ENCODE measurements at regions of chr5 and their contacts with region 1.

Region 1: DNA sequence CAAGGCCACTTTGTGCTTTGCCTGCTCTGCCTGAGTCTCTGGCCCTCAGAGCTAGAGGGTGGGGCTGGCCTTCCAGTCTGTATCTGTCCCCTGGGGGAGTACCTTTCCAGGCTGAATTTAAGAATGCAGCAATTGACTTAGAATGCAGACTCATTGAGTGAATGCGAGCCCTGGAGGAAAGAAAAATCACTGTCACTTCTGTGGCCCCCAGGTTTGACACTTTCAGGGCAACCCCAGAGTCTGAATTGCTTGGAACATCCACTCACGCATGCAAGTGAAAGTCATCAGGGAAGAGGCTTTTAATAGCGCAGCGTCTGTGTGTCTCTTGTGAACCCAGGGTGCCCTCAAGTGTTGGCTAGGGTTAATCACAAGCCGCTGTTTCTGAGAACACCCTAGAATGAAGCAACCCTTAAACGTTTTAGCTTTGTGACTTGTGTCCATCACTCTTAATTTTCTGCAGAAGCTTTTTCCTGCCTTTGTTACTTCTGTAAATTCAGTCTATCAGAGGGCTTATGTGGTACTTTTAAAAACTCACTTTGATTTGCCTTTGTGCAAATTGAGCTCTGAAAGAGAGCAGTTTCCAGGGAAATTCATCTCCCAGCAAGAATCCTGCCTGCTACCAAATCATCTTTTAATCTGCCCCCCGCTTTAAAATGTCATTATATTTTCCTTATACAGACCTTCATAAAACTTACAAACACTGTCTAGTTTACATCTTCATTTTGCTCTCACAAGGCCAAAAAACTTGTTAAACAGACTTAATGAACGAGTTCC is 146.8 kb upstream of the IQGAP2 start:
- H3K4me3 Mint-ChIP-seq: no peak overlapping the region
- H3K27ac Mint-ChIP-seq: no peak overlapping the region
- H3K4me1 Mint-ChIP-seq: peaks cover 5% of the 10 kb centered on the region
- H3K27me3 Mint-ChIP-seq: peaks cover 5% of the 10 kb centered on the region

Region 2: DNA sequence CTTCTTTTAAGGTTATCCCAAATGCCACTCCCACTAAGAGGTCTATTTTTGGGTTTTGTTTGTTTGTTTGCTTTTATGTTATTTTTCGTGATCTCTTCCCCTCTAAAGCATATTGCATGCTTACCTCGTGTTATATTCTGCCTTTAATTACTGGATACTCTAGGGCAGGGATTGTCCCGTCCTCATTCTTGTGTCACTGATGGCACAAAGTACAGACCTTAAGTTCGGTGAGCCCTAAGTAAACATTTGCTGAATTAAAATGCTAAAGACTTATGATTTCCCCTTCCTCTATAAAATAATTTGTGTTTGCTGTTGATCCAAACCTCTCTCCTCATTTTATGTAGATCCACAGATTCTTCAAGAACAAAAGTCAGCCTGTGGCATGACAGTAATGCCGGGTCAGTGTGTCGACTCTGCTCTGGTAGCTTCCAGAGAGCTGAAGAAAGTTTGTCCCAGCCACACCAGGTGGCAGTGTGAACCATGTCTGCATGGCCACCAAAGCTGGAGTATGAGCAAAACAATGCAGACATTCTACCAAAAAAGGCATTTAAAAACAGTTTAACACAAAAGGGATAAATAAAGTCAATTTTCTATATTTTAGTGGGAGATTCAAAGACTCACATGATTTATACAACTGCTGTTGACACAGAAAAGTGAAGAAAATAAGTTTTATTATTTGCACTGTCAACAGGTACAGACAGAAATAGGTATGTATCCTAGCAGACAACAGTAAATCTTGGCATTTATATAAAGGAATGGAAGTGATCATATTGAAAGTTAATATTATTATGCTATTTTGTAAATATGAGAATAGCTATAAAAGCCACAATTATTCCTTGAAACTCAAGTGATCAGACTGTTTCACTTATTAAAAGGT is 521.2 kb before region 1 on chr5:
- intact Hi-C with region 1: loop called (anchors 10 kb)
- H3K4me3 Mint-ChIP-seq: no peak overlapping the region
- H3K27ac Mint-ChIP-seq: no peak overlapping the region
- H3K4me1 Mint-ChIP-seq: no peaks in the 10 kb centered on the region
- H3K27me3 Mint-ChIP-seq: no peaks in the 10 kb centered on the region

Region 3: DNA sequence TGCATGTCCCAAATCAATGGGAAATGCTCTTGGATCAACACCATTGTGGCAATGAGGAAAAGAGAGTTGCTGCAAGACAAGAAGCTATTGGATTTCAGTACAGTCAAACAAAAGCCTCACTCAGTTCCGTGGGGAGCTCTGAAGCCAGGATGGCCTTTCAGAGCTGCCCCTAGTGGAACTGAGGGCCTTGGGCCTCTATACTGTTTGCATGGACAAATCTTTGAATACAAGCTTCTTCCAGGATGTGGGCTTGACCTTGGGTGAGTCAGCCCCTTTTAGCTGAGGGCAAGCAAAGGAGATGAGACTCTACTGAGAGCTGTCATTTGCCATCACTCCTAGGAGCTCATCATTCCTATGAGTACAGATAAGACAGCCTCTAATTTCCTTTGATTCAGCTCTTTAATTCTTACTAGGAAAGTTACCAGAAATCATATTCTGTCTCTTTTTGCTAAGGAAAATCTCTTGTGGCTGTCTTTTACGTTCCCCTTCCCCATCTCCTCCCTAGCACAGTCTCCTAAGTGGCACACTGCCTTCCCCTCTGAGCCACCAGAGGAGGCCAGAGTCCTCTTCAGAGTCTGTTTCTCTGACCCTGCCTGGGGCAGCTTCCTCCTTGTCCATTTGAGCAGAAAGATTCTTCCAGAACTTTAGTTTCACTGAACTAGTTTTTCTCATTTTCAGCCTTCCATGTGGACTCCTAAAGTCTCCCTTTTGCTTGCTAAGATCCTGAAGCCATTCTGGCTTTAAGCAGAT is 370.3 kb before region 1 on chr5:
- intact Hi-C with region 1: loop called (anchors 5 kb)
- H3K4me3 Mint-ChIP-seq: no peak overlapping the region
- H3K27ac Mint-ChIP-seq: no peak overlapping the region
- H3K4me1 Mint-ChIP-seq: no peaks in the 10 kb centered on the region
- H3K27me3 Mint-ChIP-seq: no peaks in the 10 kb centered on the region

Region 4: GRCh38 chr5:76074487-76075065 is 181.7 kb before region 1 on chr5:
- intact Hi-C with region 1: loop called (anchors 1 kb)
- H3K4me3 Mint-ChIP-seq: no peak overlapping the region
- H3K27ac Mint-ChIP-seq: no peak overlapping the region
- H3K4me1 Mint-ChIP-seq: no peaks in the 10 kb centered on the region
- H3K27me3 Mint-ChIP-seq: peaks cover 41% of the 10 kb centered on the region

Region 5: DNA sequence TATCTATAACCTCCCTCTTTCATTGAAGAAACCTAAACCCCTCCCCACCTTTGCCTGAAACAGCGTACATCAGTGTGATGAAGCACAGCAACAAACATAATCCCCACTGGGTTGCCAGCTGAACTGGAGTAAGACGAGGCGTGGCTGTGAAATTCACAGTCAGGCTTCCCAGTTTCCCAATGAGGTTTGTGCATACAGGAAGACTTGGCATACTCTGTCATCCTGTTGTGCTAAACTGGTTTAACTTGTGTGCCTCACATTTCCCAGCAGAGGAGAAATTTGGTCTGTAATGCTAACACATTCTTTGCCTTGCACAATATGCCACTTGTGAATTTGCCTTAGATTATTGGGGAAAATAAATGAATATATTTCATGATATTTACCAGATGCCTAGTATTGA is 51.6 kb before region 1 on chr5:
- intact Hi-C with region 1: no loop called
- H3K4me3 Mint-ChIP-seq: no peak overlapping the region
- H3K27ac Mint-ChIP-seq: no peak overlapping the region
- H3K4me1 Mint-ChIP-seq: peaks cover 12% of the 10 kb centered on the region
- H3K27me3 Mint-ChIP-seq: no peaks in the 10 kb centered on the region

Region 6: DNA sequence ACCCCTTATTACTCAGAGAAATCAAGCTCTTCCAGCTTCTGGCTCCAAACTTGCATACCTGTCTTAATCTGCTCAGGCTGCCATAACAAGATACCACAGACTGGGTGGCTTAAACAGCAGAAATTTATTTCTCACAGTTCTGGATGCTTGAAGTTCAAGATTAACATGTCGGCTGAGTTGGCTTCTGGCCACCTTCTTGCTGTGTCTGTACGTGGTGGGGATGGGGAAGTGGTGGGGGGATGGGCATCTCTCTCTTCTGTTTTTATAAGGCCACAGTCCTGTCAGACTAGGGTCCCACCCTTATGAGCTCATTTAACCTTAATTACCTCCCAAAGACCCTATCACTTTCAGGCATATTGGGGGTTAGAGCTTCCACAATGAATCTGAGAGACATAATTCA is 32.6 kb before region 1 on chr5:
- intact Hi-C with region 1: no loop called
- H3K4me3 Mint-ChIP-seq: no peak overlapping the region
- H3K27ac Mint-ChIP-seq: no peak overlapping the region
- H3K4me1 Mint-ChIP-seq: peaks cover 6% of the 10 kb centered on the region
- H3K27me3 Mint-ChIP-seq: no peaks in the 10 kb centered on the region

Region 7: DNA sequence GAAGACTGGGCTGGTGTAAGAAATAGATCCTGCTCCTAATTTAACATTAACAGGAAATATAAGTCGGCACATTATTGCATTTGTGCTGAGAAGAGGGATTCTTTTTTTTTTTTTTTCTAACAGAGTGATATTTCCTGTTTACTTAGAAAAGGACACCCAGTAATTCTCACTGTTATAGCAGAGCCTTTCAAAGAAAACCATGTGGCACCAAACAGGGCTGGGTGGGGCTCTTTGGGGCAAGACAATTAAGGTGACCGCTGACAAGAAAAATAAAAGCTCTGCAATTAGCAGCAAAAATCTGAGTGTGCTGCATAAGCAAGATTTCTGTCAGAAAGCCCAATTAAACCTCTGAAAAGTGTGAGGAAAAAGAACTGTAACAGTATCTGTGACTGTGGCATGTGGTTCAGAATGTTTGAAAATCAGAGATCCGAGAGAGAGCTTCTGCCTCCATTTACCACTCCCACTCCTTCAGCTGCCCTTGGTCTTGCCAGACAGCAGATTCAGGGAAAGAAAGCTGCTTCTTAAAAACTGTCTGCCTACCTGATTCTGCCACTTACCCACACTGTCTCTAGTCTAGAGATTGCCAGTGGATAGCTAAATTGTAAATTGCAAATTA is 69.7 kb after region 1 on chr5:
- intact Hi-C with region 1: no loop called
- H3K4me3 Mint-ChIP-seq: no peak overlapping the region
- H3K27ac Mint-ChIP-seq: peak overlapping the region; percentile 73
- H3K4me1 Mint-ChIP-seq: peaks cover 25% of the 10 kb centered on the region
- H3K27me3 Mint-ChIP-seq: peaks cover 2% of the 10 kb centered on the region

Measured in dendritic cell treated with granulocyte-macrophage colony-stimulating factor and Interleukin-4, amounts not matched to agents 40 ng/mL and 50 ng/mL, for 4 days (primary cell).